Mammary epithelial cell (primary cell): ENCODE measurements at regions of chr10 and their contacts with region 1.

Region 1: DNA sequence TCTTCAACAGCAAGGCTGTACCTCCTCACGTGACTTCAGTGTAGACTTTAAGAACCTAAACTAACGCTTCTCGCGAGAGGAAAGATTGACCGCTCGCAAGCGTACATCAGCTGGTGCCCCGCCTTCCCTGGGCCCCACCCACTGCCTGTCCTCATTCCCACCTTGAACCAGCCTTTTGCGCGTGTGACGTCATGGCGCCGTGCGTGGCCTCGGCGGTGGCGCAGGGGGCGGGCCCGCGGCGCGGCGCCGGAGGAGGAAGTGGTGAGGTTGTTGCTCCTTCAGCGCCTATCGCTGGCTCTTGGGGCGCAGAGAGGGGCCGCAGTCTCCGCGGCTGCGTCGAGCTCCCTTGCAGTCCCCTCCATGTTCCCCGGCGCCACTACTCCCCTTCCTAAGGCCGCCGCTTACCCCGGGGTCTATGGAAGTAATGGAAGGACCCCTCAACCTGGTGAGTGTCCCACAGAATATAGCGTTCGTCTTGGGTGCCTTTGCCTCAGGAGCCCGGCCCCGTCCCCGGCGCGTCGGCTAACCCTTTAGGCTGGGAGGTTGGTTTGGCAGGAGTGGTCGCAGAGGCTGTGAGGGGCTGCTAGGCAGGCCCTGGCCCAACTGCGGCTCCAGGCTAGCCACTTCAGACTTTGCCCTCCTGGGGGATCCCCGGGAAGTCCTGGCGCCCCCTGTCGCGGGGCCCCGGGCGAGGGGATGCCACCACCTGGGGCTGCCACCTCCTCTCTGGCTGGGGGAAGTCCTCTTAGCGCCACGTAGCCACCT is at the start of gene NRBF2:
- DNase-seq: peak; percentile 97
- H3K4me3 ChIP-seq: peak within 1 kb of the TSS; percentile 78 to 82 (median 81)
- H3K27ac ChIP-seq: peak within 1 kb of the TSS; percentile 83
- H3K4me1 ChIP-seq: peaks cover 12% of the 10 kb centered on the region
- H3K27me3 ChIP-seq: no peaks in the 10 kb centered on the region
- CTCF ChIP-seq: peak in 1 of 2 donors; percentile 36
- total RNA-seq, gene NRBF2: 32.5 to 45.8 TPM

Region 2: DNA sequence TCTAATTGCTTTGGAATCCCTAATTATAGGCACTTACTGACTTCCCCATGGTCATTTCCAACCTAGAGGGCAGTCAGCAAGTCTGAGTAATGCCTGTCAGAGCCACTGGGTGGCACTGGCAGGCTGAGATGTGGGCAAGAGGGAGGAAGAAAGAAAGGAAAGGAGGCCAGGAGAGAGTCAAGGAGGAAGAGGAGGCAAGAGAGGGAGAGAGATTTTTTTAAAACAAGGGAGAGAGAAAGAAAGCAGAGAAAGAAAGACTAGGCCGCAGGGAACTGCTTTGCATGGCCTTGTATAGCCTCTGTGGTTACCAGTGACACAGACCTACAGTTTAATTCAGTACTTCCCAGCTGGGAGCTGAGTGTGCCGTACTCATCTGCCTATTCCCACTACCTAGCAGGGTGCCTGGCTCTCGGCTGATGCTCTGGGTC is 539.1 kb before region 1 on chr10:
- CTCF ChIA-PET with region 1: no interaction called
- dilution Hi-C with region 1: no loop called
- in situ Hi-C with region 1: no loop called
- intact Hi-C with region 1: loop called (anchors 2 kb)
- DNase-seq: peak; percentile 51
- H3K4me3 ChIP-seq: no peak overlapping the region
- H3K27ac ChIP-seq: no peak overlapping the region
- H3K4me1 ChIP-seq: peaks cover 4% of the 10 kb centered on the region
- H3K27me3 ChIP-seq: no peaks in the 10 kb centered on the region
- CTCF ChIP-seq: peak; percentile 92 to 96

Region 3: DNA sequence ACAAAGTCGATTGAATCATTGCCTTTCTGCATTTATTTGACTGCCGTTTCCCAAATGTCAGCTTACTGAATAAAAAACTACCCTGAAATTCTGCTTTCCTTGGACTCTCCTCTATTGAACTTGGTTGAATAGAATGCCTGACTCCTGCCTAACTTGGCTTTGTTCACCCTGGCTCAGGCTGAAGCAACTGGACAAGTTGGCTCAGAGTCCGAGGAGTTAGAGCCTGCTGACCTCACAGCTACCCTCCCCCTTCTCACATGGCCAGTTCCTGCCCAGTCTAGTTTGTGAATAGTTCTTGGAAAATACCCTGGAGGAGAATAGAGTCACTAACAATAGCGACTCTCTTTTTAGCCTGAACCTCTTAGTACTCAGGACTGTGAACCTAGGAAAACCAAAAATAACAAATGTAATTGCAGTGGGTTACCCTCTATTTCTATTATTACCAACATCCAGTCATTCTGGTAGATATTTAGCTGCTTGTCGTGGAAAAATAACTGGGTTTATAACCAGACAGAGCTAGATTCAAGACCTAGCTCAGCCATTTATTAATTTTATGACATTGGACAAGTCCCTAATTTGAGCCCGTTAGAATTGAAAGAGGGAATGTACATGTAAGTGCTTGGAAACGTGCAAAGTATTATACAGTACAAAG is 17.4 kb before region 1 on chr10:
- CTCF ChIA-PET with region 1: no interaction called
- dilution Hi-C with region 1: no loop called
- in situ Hi-C with region 1: no loop called
- intact Hi-C with region 1: loop called (anchors 1 kb)
- DNase-seq: peak; percentile 94
- H3K4me3 ChIP-seq: no peak overlapping the region
- H3K27ac ChIP-seq: peak overlapping the region; percentile 60
- H3K4me1 ChIP-seq: peaks cover 19% of the 10 kb centered on the region
- H3K27me3 ChIP-seq: no peaks in the 10 kb centered on the region
- CTCF ChIP-seq: no peak

Region 4: DNA sequence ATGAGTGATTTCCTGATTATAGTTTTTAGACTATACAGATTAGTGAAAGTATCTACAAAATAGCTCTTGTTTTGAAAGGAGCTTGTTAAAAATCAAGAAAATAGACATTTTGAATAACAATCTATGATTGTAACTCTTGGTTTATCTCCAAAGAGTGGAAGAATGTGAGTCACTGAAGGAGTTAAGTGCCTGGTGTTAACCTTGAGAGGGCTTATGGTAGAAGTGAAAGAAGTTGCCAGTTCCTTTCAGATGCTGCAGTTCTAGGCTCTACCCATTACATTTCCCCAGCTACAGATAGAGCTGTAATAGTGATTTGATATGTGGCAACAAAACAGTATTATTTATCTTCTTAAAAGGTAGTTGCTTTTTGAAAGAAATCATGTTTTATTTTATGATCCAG is 12.5 kb after region 1 on chr10:
- CTCF ChIA-PET with region 1: no interaction called
- dilution Hi-C with region 1: no loop called
- in situ Hi-C with region 1: no loop called
- intact Hi-C with region 1: loop called (anchors 1 kb)
- DNase-seq: no peak
- H3K4me3 ChIP-seq: no peak overlapping the region
- H3K27ac ChIP-seq: no peak overlapping the region
- H3K4me1 ChIP-seq: no peaks in the 10 kb centered on the region
- H3K27me3 ChIP-seq: no peaks in the 10 kb centered on the region
- CTCF ChIP-seq: no peak

Region 5: DNA sequence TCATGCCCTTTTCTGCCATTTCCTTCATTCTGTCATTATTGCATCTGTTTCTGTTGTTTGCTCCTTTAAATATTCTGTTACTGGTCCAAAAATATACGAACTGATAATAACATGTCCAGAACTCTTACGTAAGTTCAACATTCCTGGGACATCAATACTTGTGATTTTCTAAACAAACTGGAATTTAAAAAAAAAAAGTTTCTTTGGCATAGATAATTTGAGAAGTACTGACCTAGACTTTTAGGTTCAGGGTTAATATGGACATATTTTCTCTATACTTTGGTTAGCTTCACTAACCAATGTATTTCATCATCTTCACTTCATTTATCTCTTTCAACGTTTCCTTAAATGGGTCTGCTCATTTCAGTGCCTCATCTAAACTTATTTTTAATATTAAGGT is 185.3 kb after region 1 on chr10:
- CTCF ChIA-PET with region 1: no interaction called
- dilution Hi-C with region 1: no loop called
- in situ Hi-C with region 1: no loop called
- intact Hi-C with region 1: no loop called
- DNase-seq: no peak
- H3K4me3 ChIP-seq: no peak overlapping the region
- H3K27ac ChIP-seq: no peak overlapping the region
- H3K4me1 ChIP-seq: no peaks in the 10 kb centered on the region
- H3K27me3 ChIP-seq: no peaks in the 10 kb centered on the region
- CTCF ChIP-seq: no peak

Region 6: DNA sequence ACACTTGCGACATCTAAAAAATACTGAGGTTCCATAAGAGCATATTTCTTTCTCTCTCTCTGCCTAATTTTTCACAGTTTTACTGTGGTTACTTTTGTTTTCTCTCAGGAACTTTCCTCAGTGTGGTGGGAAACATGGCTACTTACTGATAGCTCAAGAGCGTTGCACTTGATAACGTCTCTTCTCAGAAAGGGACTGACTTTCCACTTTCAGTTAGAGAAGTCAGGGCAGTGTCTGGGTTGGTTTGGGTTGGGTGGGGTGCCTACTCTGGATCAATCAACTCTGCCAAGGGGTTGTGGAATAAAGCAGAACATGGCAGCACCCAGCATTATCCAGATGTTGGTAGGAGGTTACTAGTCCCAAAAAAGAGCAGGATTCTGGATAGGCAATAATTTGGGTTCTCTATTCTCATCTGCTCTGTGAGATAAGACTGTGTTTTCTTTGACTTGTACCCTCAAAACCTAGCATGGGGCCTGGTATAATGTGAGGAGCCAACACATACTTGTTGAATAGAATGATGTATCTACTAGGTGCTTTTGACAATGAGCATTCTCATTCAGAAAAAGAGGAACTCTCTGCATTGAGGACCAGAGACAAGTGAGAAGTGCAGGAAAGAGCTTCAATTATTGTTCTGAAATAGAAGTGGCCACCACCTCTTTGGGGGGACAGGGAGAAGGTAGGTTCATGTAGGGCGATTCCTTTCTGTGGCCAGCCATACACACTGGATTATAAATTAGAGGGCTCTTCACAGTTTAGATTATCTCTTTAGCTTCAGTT is 703.6 kb after region 1 on chr10:
- CTCF ChIA-PET with region 1: no interaction called
- dilution Hi-C with region 1: no loop called
- in situ Hi-C with region 1: no loop called
- intact Hi-C with region 1: no loop called
- DNase-seq: no peak
- H3K4me3 ChIP-seq: no peak overlapping the region
- H3K27ac ChIP-seq: no peak overlapping the region
- H3K4me1 ChIP-seq: no peaks in the 10 kb centered on the region
- H3K27me3 ChIP-seq: no peaks in the 10 kb centered on the region
- CTCF ChIP-seq: no peak